ENCODE measurements at regions of chr6 and their contacts with region 1.

Region 1: DNA sequence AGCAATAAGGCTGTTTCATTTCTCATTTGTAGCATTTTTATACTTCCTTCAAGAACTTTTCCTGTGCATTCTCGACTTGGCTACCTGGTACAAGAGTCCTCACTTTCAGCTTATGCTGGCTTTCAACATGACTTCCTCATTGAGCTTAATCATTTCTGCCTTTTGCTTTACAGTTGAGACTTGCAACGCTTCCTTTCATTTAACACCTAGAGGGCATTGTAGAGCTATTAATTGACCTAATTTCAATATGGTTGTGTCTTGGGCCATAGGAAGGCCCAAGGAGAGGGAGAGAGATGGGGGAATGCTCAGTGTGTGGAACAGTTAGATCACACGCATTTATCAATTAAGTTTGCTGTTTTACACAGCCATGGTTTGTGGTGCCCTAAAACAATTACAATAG is 37.2 kb downstream of the SLC22A2 start:
- H3K4me3 ChIP-seq: no peak overlapping the region
- H3K27ac ChIP-seq: no peak overlapping the region
- H3K4me1 ChIP-seq: no peaks in the 10 kb centered on the region
- CTCF ChIP-seq: no peak

Region 2: GRCh38 chr6:160297310-160297709 is 75.9 kb after region 1 on chr6:
- CTCF ChIA-PET with region 1: interaction called, 12 read pairs
- POLR2A ChIA-PET with region 1: no interaction called
- H3K4me3 ChIP-seq: no peak overlapping the region
- H3K27ac ChIP-seq: no peak overlapping the region
- H3K4me1 ChIP-seq: no peaks in the 10 kb centered on the region
- CTCF ChIP-seq: no peak

Measured in HEK293 (cell line).